ENCODE measurements at regions of chr4 and their contacts with region 1.

Region 1: DNA sequence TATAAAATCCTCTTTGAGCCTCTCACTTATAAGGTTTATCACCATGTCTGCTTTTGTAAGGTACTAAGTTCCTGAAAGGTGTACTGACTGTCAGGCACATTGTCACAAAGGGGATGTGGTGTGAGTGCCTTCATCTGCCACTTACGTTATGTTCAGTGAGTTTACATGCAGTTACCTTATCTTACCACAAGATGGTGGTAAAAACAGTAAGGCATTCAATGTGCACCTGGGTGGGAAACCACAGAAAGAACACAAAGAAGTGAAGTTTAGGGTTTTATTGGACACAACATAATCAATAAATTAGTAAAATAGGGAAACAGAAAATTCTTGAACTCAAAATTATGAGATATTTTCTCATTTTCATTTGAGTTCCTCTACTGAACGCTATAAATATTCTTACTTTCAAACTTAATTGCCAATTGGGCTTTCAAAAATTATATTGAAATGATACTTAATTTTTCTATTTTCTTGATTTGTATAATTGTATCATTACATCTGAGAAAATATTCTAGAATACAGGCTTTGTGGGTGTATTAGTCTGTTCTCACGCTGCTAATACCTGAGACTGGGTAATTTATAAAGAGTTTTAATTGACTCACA is 650.8 kb downstream of the PCDH7 start:
- DNase-seq: peak; percentile 79
- H3K4me3 ChIP-seq: no peak overlapping the region
- H3K27ac ChIP-seq: no peak overlapping the region
- H3K4me1 ChIP-seq: peaks cover 6% of the 10 kb centered on the region
- H3K27me3 ChIP-seq: no peaks in the 10 kb centered on the region
- CTCF ChIP-seq: peak; percentile 84

Region 2: GRCh38 chr4:31518796-31519250 is 147.9 kb after region 1 on chr4:
- CTCF ChIA-PET with region 1: no interaction called
- POLR2A ChIA-PET with region 1: no interaction called
- intact Hi-C with region 1: loop called (anchors 2 kb)
- DNase-seq: peak; percentile 70
- H3K4me3 ChIP-seq: no peak overlapping the region
- H3K27ac ChIP-seq: peak overlapping the region; percentile 26
- H3K4me1 ChIP-seq: peaks cover 6% of the 10 kb centered on the region
- H3K27me3 ChIP-seq: no peaks in the 10 kb centered on the region
- CTCF ChIP-seq: no peak

Region 3: DNA sequence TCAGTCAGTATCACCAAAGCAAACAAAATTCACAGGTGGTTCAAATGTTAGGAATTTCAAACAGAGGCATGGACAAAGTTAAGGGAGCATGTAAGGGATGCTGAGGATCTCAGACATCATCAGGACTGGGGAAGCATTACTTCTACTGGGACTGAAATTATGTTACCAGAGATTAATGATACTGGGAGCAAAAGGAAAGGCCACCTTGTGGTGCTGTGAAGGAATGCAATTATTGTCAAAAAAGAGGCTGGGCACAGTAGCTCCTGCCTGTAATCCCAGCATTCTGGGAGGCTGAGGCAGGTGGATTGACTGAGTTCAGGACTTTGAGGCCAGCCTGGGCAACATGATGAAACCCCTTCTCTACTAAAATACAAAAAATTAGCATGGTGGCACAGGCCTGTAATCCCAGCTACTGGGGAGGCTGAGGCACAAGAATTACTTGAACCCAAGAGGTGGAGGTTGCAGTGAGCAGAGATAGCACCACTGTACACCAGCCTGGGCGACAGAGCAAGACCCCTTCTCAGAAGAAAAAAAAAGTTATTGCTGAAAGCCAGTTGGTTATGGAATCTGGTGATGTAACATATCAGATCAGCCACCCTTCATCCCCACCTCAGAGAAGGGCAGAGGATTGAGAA is 303.5 kb after region 1 on chr4:
- CTCF ChIA-PET with region 1: no interaction called
- POLR2A ChIA-PET with region 1: no interaction called
- intact Hi-C with region 1: loop called (anchors 5 kb)
- DNase-seq: peak; percentile 54
- H3K4me3 ChIP-seq: no peak overlapping the region
- H3K27ac ChIP-seq: no peak overlapping the region
- H3K4me1 ChIP-seq: peaks cover 23% of the 10 kb centered on the region
- H3K27me3 ChIP-seq: no peaks in the 10 kb centered on the region
- CTCF ChIP-seq: peak; percentile 70

Region 4: DNA sequence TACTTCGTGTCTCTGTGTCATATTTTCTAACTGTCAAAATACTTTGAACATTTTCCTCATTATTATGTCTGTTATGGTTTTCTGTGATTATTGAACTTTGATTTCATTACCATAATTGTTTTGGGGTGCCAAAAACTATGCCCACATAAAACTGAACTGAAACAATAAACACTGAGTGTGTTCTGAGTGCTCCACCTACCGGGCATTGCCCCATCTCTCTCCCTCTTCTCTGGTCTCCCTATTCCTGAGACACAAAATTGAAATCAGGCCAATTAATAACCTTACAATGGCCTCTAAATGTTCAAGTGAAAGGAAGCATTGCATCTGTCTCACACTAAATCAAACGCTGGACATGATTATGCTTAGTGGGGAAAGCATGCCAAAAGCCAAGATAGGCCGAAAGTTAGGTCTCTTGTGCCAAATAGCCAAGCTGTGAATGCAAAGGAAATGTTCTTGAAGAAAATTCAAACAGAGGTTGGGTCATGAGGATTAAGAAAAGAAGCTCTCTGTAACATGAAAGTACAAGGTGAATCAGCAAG is 321.5 kb after region 1 on chr4:
- CTCF ChIA-PET with region 1: no interaction called
- POLR2A ChIA-PET with region 1: no interaction called
- intact Hi-C with region 1: loop called (anchors 5 kb)
- DNase-seq: peak; percentile 32
- H3K4me3 ChIP-seq: no peak overlapping the region
- H3K27ac ChIP-seq: no peak overlapping the region
- H3K4me1 ChIP-seq: no peaks in the 10 kb centered on the region
- H3K27me3 ChIP-seq: no peaks in the 10 kb centered on the region
- CTCF ChIP-seq: peak; percentile 59